Activated CD8-positive, alpha-beta T cell treated with anti-CD3 and anti-CD28 coated beads for 36 hours (primary cell): ENCODE measurements at regions of chr20 and their contacts with region 1.

Region 1: GRCh38 chr20:1625083-1625690 is 5.4 kb upstream of the SIRPB1 start:
- DNase-seq: no peak
- ATAC-seq: peak; percentile 66
- H3K4me3 Mint-ChIP-seq: peak overlapping the region; percentile 31
- H3K27ac Mint-ChIP-seq: peak overlapping the region; percentile 95
- H3K4me1 Mint-ChIP-seq: peaks cover 92% of the 10 kb centered on the region
- H3K27me3 Mint-ChIP-seq: no peaks in the 10 kb centered on the region
- CTCF ChIP-seq: no peak

Region 2: DNA sequence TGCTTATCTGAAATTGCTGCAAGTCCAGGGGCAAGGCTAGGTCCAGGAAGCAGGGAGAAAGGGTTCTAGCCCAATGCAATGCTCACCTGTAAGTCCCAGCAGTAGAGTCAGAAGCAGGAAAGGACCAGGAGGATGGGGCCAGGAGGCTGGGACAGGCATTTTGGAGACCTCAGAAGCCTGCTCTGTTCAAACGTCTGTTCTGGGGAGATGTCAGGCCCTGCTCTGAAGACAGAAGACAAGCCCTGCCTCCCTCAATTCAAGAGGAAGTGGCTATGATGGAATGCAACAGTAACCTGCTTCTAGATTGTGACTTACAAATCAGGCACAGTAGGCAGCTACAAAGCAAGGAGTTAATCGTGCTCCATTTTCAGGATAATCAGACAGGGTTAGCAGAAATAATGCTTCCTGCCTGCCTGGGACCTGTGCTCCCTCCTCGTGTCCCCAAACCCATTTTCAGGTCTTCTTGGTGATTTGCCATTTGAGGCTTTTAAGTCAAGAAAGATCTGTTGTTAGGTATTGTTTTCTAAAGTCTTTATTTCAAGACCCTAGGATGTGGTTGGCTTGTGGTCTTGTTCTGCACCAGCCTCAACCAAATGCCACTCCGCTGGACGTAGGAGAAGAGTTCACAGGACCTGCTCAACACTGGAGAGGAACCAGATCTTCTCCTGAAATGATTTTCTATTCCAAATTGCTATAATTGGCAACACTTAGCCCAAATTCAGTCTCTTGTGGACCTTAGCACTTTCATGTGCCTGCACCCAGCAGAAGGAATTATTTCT is 32.6 kb after region 1 on chr20 and contains the start of gene SIRPG:
- CTCF ChIA-PET with region 1: no interaction called
- POLR2A ChIA-PET with region 1: no interaction called
- intact Hi-C with region 1: no loop called
- DNase-seq: peak; percentile 72
- ATAC-seq: peak; percentile 65
- H3K4me3 Mint-ChIP-seq: peak within 1 kb of the TSS; percentile 94
- H3K27ac Mint-ChIP-seq: peak within 1 kb of the TSS; percentile 99
- H3K4me1 Mint-ChIP-seq: peaks cover 87% of the 10 kb centered on the region
- H3K27me3 Mint-ChIP-seq: no peaks in the 10 kb centered on the region
- CTCF ChIP-seq: no peak
- total RNA-seq, gene SIRPG: 45.4 to 48.6 TPM

Region 3: DNA sequence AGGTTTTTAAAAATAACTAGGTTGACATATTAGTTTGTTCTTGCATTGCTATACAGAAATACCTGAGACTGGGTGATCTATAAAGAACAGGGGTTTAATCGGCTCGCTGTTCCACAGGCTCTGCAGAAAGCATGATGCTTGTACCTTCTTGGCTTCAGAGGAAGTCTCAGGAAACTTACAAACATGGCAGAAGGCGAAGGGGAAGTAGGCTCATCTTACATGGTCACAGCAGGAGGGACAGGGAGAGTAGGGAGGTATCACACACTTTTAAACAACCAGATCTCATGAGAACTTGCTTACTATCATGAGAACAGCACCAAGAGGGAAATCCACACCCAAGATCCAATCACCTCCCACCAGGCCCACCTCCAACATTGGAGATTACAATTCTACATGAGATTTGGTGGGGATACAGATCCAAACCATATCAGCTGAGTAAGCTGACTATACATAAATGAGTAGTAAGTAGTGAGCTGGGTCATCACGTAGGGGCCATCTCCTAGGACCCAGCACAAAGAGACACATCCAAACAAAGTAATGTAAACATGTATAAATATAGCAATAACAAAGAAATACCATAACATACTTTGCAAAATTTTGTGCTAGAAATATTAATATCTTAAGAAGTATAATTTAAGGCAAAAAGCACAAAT is 63.8 kb after region 1 on chr20:
- CTCF ChIA-PET with region 1: interaction called, 3 read pairs
- POLR2A ChIA-PET with region 1: no interaction called
- intact Hi-C with region 1: loop called (anchors 1 kb)
- DNase-seq: peak; percentile 35
- ATAC-seq: peak; percentile 21
- H3K4me3 Mint-ChIP-seq: no peak overlapping the region
- H3K27ac Mint-ChIP-seq: peak overlapping the region; percentile 76
- H3K4me1 Mint-ChIP-seq: peaks cover 50% of the 10 kb centered on the region
- H3K27me3 Mint-ChIP-seq: no peaks in the 10 kb centered on the region
- CTCF ChIP-seq: no peak